Caco-2 (cell line): ENCODE measurements at regions of chr11 and their contacts with region 1.

Region 1: GRCh38 chr11:72080256-72080974 is at the starts of genes LRRC51 and NUMA1:
- DNase-seq: peak; percentile 100
- H3K4me3 ChIP-seq: peak within 1 kb of the TSS; percentile 92
- H3K4me3 Mint-ChIP-seq: peak within 1 kb of the TSS; percentile 86
- H3K27ac Mint-ChIP-seq: peak within 1 kb of the TSS; percentile 99
- H3K4me1 ChIP-seq: peaks cover 19% of the 10 kb centered on the region
- H3K4me1 Mint-ChIP-seq: peaks cover 28% of the 10 kb centered on the region
- H3K27me3 ChIP-seq: no peaks in the 10 kb centered on the region
- H3K27me3 Mint-ChIP-seq: no peaks in the 10 kb centered on the region
- CTCF ChIP-seq: no peak
- total RNA-seq, gene LRRC51: 13.7 and 13.8 TPM in 2 replicates
- total RNA-seq, gene NUMA1: 182 and 190 TPM in 2 replicates

Region 2: GRCh38 chr11:72040726-72041441 is 39.5 kb before region 1 on chr11:
- CTCF ChIA-PET with region 1: interaction called, 3 read pairs
- POLR2A ChIA-PET with region 1: interaction called, 6 read pairs
- intact Hi-C with region 1: loop called (anchors 1 kb)
- DNase-seq: peak; percentile 37 to 56
- H3K4me3 ChIP-seq: peak overlapping the region; percentile 16
- H3K4me3 Mint-ChIP-seq: no peak overlapping the region
- H3K27ac Mint-ChIP-seq: no peak overlapping the region
- H3K4me1 ChIP-seq: peaks cover 31% of the 10 kb centered on the region
- H3K4me1 Mint-ChIP-seq: peaks cover 12% of the 10 kb centered on the region
- H3K27me3 ChIP-seq: no peaks in the 10 kb centered on the region
- H3K27me3 Mint-ChIP-seq: no peaks in the 10 kb centered on the region
- CTCF ChIP-seq: no peak

Region 3: GRCh38 chr11:72091005-72091691 is 10.7 kb after region 1 on chr11:
- CTCF ChIA-PET with region 1: interaction called, 10 read pairs
- POLR2A ChIA-PET with region 1: no interaction called
- intact Hi-C with region 1: loop called (anchors 1 kb)
- DNase-seq: peak; percentile 88 to 91
- H3K4me3 ChIP-seq: no peak overlapping the region
- H3K4me3 Mint-ChIP-seq: no peak overlapping the region
- H3K27ac Mint-ChIP-seq: no peak overlapping the region
- H3K4me1 ChIP-seq: peaks cover 6% of the 10 kb centered on the region
- H3K4me1 Mint-ChIP-seq: peaks cover 14% of the 10 kb centered on the region
- H3K27me3 ChIP-seq: no peaks in the 10 kb centered on the region
- H3K27me3 Mint-ChIP-seq: no peaks in the 10 kb centered on the region
- CTCF ChIP-seq: peak; percentile 97 to 99

Region 4: GRCh38 chr11:72102946-72103753 is 22.7 kb after region 1 on chr11 and contains the start of gene LAMTOR1:
- CTCF ChIA-PET with region 1: no interaction called
- POLR2A ChIA-PET with region 1: interaction called, 3 read pairs
- intact Hi-C with region 1: loop called (anchors 1 kb)
- DNase-seq: peak; percentile 100
- H3K4me3 ChIP-seq: peak within 1 kb of the TSS; percentile 93
- H3K4me3 Mint-ChIP-seq: peak within 1 kb of the TSS; percentile 97
- H3K27ac Mint-ChIP-seq: peak within 1 kb of the TSS; percentile 98
- H3K4me1 ChIP-seq: peaks cover 18% of the 10 kb centered on the region
- H3K4me1 Mint-ChIP-seq: peaks cover 26% of the 10 kb centered on the region
- H3K27me3 ChIP-seq: no peaks in the 10 kb centered on the region
- H3K27me3 Mint-ChIP-seq: no peaks in the 10 kb centered on the region
- CTCF ChIP-seq: peak; percentile 72 to 79
- total RNA-seq, gene LAMTOR1: 158 and 170 TPM in 2 replicates

Region 5: GRCh38 chr11:72112321-72113219 is 32.2 kb after region 1 on chr11 and contains the start of gene ANAPC15:
- CTCF ChIA-PET with region 1: no interaction called
- POLR2A ChIA-PET with region 1: interaction called, 15 read pairs
- intact Hi-C with region 1: loop called (anchors 1 kb)
- DNase-seq: peak; percentile 99 to 100
- H3K4me3 ChIP-seq: peak within 1 kb of the TSS; percentile 52
- H3K4me3 Mint-ChIP-seq: peak within 1 kb of the TSS; percentile 94
- H3K27ac Mint-ChIP-seq: peak within 1 kb of the TSS; percentile 100
- H3K4me1 ChIP-seq: peaks cover 9% of the 10 kb centered on the region
- H3K4me1 Mint-ChIP-seq: no peaks in the 10 kb centered on the region
- H3K27me3 ChIP-seq: no peaks in the 10 kb centered on the region
- H3K27me3 Mint-ChIP-seq: no peaks in the 10 kb centered on the region
- CTCF ChIP-seq: no peak
- total RNA-seq, gene ANAPC15: 98.6 and 105 TPM in 2 replicates

Region 6: GRCh38 chr11:72352859-72353551 is 272.6 kb after region 1 on chr11:
- CTCF ChIA-PET with region 1: no interaction called
- POLR2A ChIA-PET with region 1: interaction called, 12 read pairs
- intact Hi-C with region 1: no loop called
- DNase-seq: peak; percentile 46 to 60
- H3K4me3 ChIP-seq: no peak overlapping the region
- H3K4me3 Mint-ChIP-seq: no peak overlapping the region
- H3K27ac Mint-ChIP-seq: no peak overlapping the region
- H3K4me1 ChIP-seq: peaks cover 7% of the 10 kb centered on the region; the same call in 1 of the 2 replicates
- H3K4me1 Mint-ChIP-seq: peaks cover 9% of the 10 kb centered on the region
- H3K27me3 ChIP-seq: no peaks in the 10 kb centered on the region
- H3K27me3 Mint-ChIP-seq: no peaks in the 10 kb centered on the region
- CTCF ChIP-seq: peak; percentile 21 to 35